A673 (cell line): ENCODE measurements at regions of chr17 and their contacts with region 1.

Region 1: DNA sequence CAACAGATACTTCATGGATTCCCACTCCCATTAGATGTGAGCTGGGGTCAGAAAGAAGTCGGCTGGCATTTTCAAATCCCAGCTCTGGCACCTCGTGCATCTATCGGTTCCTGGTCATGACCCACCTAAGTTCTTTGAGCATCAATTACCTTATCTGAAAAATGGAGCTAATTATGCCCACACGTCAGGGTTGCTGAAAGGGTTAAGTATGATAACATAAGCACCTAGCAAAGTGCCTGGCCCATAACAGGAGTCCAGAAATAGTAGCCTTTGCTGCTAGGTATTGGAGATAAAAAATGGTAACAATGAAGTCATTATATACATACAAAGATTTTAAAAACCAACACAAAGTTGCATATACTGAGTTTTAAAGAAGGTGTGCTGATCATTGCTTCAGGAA is 14.1 kb upstream of the GNA13 start:
- DNase-seq: no peak
- H3K4me3 ChIP-seq: no peak overlapping the region
- H3K27ac ChIP-seq: no peak overlapping the region
- H3K4me1 ChIP-seq: no peaks in the 10 kb centered on the region
- H3K27me3 ChIP-seq: no peaks in the 10 kb centered on the region
- CTCF ChIP-seq: no peak

Region 2: GRCh38 chr17:64984851-64985521 is 85.6 kb before region 1 on chr17:
- CTCF ChIA-PET with region 1: no interaction called
- POLR2A ChIA-PET with region 1: no interaction called
- intact Hi-C with region 1: no loop called
- DNase-seq: no peak
- H3K4me3 ChIP-seq: no peak overlapping the region
- H3K27ac ChIP-seq: no peak overlapping the region
- H3K4me1 ChIP-seq: peaks cover 16% of the 10 kb centered on the region
- H3K27me3 ChIP-seq: no peaks in the 10 kb centered on the region
- CTCF ChIP-seq: no peak

Region 3: DNA sequence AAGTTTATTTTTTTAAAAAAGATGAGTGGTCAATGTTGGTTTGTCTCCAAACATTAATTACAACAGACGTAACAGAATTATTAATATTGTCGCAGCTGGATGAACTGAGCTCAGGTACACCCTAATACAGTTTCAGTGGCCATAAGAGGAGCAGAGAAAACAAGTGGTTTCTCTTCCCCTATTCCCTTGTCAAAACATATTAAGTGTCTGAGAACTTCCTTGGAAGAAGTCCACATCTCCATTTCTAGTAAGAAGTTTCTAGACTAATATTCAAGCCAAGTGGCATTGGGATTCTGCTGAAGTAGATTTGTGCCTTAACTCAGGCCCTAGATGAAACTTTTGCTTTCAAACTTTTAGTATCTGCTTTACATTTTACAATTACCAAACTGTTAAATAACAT is 61.7 kb before region 1 on chr17:
- CTCF ChIA-PET with region 1: no interaction called
- POLR2A ChIA-PET with region 1: interaction called, 19 read pairs
- intact Hi-C with region 1: no loop called
- DNase-seq: no peak
- H3K4me3 ChIP-seq: no peak overlapping the region
- H3K27ac ChIP-seq: no peak overlapping the region
- H3K4me1 ChIP-seq: no peaks in the 10 kb centered on the region
- H3K27me3 ChIP-seq: no peaks in the 10 kb centered on the region
- CTCF ChIP-seq: no peak

Region 4: DNA sequence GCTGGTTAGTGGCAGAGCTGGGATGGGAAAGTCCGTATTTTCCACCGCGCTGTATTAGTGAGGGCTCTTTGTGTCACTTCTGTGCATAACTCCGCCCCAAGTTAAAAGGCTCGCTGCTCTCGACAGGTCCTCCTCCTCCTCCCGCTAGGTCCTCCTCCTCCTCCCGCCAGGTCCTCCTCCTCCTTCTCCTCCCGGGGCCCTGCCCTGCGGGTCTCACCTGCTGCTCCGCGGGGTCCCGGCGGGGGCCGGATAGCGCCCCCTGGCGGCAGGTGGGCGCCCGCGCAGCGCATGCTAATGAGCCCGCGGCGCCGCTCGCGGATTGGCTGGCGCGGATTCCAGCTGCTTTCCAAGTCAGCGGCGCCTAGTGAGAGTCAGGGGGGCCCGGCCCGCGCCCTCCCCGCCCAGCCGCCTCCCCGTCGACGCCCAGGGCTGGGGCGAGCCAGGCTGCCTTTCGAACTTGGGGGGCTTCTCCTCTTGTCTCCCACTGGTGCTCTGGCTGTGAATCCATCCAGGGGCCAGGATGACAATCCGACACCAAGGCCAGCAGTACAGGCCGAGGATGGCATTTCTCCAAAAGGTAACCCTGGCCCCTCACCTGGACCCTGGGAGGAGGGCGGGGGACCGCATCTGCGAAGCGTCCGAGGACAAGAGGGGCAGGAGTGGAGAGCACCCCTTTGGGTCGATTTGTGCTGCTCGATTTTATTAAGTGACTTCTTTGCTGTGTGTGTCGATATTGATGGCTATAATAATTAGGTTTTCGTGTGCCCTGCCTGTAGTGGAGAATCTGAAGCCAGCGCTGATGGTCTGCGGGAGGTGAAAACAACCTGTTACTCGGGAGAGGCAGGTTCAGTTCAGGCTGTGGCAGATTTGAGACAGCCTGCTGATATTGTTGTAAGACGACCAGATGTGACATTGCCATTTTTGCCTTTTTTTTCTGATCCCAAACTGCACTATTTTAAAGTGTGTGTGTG is 66.7 kb after region 1 on chr17 and contains the start of gene RGS9:
- CTCF ChIA-PET with region 1: no interaction called
- POLR2A ChIA-PET with region 1: no interaction called
- intact Hi-C with region 1: no loop called
- DNase-seq: peak; percentile 74
- H3K4me3 ChIP-seq: peak within 1 kb of the TSS; percentile 30
- H3K27ac ChIP-seq: no peak within 1 kb of the TSS
- H3K4me1 ChIP-seq: no peaks in the 10 kb centered on the region
- H3K27me3 ChIP-seq: peaks cover 26% of the 10 kb centered on the region
- CTCF ChIP-seq: peak; percentile 88
- total RNA-seq, gene RGS9: 1.8 and 2.8 TPM in 2 replicates